PC-9 (cell line): ENCODE measurements at regions of chr4 and their contacts with region 1.

Region 1: DNA sequence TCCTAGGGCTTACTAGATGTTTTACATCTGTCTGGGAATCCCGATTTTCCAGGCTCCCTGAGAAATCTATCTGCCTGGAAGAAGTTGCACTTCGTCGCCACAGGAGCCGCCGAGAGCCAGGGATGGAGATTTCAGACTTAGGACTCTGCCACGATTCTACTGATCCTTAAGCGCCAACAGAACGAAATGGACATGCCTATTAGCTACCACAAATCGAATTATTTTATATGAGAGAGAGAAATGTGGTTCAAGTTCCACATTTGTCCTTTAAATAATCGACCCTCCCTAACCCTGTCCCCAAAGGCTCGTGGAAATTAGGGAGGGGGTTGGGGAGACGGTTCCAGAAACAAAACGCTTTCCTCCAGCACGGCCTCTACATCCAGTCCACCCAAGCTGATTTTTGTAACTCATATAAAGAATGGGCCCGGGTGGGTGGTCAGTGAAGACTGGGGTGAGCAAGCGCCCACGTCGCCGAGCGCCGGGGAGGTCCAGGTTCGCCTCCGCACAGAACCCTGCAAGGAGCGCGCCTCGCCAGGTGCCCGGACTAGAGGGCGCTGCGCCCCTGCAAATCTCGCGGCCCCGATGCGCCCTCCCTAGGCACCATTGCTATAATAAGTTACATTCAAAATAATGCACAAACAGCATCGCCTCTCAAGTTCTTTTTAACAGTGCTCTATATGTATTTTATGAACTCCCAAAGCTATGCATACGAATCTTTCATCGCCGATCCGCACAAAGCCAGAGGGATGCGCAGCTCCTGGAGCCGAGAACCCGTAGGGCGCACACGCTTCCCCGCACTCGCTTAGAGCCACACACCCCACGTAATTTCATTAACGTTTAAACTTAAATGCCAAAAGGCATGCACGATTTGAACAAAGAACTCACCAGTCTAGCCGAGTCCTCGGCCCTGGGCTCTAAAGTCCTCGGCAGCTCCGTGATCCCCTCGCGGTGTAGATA is 2.1 kb upstream of the FAT1 start:
- DNase-seq: peak; percentile 45 to 79
- H3K4me3 ChIP-seq: peak overlapping the region; percentile 98
- H3K27ac ChIP-seq: peak overlapping the region; percentile 57
- H3K4me1 ChIP-seq: peaks cover 40% of the 10 kb centered on the region
- H3K27me3 ChIP-seq: no peaks in the 10 kb centered on the region
- CTCF ChIP-seq: peak; percentile 77

Region 2: GRCh38 chr4:186297013-186297645 is 428.6 kb before region 1 on chr4:
- CTCF ChIA-PET with region 1: no interaction called
- POLR2A ChIA-PET with region 1: no interaction called
- intact Hi-C with region 1: loop called (anchors 5 kb)
- DNase-seq: no peak
- H3K4me3 ChIP-seq: no peak overlapping the region
- H3K27ac ChIP-seq: no peak overlapping the region
- H3K4me1 ChIP-seq: no peaks in the 10 kb centered on the region
- H3K27me3 ChIP-seq: peaks cover 14% of the 10 kb centered on the region
- CTCF ChIP-seq: peak; percentile 67

Region 3: DNA sequence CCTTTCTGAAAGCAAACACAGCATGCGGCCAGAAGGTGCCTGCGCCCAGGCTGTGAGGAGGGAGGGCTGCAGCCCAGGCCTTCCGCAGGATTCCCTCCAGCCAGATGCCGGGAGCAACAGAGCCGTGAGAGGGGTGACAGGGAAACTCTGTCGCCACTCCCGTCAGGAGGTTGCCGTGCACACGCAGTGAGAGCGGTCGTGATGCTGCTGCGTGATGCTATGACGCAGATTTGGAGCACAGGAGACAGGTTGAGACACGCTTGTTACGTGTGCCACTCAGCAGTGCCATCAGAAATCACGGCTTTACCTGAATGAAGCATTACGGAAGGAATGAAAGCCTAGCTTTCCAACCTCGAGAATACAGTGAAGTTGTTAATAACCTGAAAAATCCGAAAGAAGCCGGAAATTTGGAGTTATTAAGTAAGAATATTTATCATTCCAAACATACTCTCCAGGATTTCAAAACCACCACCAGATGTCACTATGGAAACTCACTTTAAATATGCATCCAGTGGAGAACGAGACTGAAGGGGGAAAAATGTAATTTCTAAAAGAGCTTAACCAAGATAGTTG is 56.5 kb before region 1 on chr4:
- CTCF ChIA-PET with region 1: interaction called, 4 read pairs
- POLR2A ChIA-PET with region 1: no interaction called
- intact Hi-C with region 1: loop called (anchors 1 kb)
- DNase-seq: no peak
- H3K4me3 ChIP-seq: no peak overlapping the region
- H3K27ac ChIP-seq: no peak overlapping the region
- H3K4me1 ChIP-seq: no peaks in the 10 kb centered on the region
- H3K27me3 ChIP-seq: no peaks in the 10 kb centered on the region
- CTCF ChIP-seq: peak; percentile 52

Region 4: DNA sequence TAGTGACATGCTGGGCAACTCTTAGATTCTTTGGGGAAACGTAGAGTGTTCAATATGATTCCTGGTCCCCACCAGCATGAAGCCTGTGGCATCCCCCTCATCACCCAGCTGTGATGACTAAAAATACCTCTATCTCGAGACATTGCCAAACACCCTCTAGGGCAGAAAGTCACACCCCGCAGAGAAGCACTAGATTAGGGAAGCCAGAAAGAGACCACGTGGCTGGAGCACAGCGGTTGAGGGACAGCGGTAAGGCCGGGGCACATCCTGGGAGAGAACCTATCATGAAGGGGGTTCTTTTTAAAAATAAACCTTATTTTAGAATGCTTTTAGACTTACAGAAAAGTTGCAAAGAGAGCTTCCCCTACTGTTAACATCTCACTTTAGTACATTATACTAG is 13.1 kb before region 1 on chr4:
- CTCF ChIA-PET with region 1: no interaction called
- POLR2A ChIA-PET with region 1: no interaction called
- intact Hi-C with region 1: no loop called
- DNase-seq: no peak
- H3K4me3 ChIP-seq: no peak overlapping the region
- H3K27ac ChIP-seq: no peak overlapping the region
- H3K4me1 ChIP-seq: no peaks in the 10 kb centered on the region
- H3K27me3 ChIP-seq: no peaks in the 10 kb centered on the region
- CTCF ChIP-seq: no peak

Region 5: GRCh38 chr4:186765138-186765537 is 39.4 kb after region 1 on chr4:
- CTCF ChIA-PET with region 1: no interaction called
- POLR2A ChIA-PET with region 1: no interaction called
- intact Hi-C with region 1: loop called (anchors 2 kb)
- DNase-seq: peak; percentile 80 to 92
- H3K4me3 ChIP-seq: peak overlapping the region; percentile 45; the same call in 1 of the 2 replicates
- H3K27ac ChIP-seq: peak overlapping the region; percentile 90
- H3K4me1 ChIP-seq: peaks cover 30% of the 10 kb centered on the region
- H3K27me3 ChIP-seq: no peaks in the 10 kb centered on the region
- CTCF ChIP-seq: no peak

Region 6: DNA sequence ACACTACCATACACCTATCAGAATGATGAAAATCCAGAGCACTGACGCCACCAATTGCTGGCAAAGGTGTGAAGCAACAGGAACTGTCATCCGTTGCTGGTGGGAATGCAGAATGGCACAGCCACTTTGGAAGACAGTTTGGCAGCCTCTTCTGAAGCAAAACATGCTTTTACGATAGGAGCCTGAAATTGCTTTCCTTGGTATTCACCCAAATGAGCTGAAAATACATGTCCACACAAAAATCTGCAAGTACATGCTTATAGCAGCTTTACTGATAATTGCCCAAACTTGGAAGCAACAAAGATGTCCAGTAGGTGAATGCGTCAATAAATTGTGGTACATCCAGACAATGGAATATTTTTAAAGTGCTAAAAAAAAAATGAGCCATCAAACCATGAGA is 320.7 kb after region 1 on chr4:
- CTCF ChIA-PET with region 1: no interaction called
- POLR2A ChIA-PET with region 1: no interaction called
- intact Hi-C with region 1: loop called (anchors 5 kb)
- DNase-seq: no peak
- H3K4me3 ChIP-seq: no peak overlapping the region
- H3K27ac ChIP-seq: no peak overlapping the region
- H3K4me1 ChIP-seq: no peaks in the 10 kb centered on the region
- H3K27me3 ChIP-seq: peaks cover 3% of the 10 kb centered on the region; the same call in 1 of the 2 replicates
- CTCF ChIP-seq: no peak

Region 7: DNA sequence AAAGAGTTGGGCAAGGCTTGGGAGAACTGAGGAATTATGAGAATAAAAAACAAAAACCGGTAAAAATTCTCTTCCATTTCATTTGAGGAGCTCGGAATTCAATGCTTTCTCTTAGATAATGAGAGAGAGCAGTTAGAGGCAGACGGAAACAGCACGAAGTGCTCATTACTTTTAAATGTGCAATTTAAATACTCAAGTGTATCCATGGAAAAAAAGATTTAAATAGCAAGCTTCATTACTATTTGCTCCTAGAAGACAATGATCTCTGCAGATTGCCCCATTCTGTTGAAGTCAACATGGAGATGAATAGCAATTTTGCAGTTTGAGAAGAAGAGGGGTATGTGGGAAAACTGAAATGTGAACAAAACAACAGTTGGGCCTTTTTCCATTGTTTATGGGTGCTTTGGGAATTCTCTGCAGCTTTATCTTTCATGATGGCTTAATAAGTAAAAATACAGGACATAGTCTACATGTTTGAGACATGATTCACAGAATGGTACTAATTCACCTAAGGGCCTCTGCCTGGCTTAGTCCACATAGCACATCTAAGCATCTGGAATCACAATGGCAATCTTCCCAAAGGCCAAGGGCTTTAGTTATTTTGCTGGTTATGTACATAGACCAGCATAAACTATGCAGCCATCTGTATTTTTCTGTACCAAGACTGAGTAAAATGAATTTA is 510.6 kb after region 1 on chr4:
- CTCF ChIA-PET with region 1: no interaction called
- POLR2A ChIA-PET with region 1: interaction called, 13 read pairs
- intact Hi-C with region 1: no loop called
- DNase-seq: peak in 1 of 2 experiments; percentile 37
- H3K4me3 ChIP-seq: no peak overlapping the region
- H3K27ac ChIP-seq: no peak overlapping the region
- H3K4me1 ChIP-seq: no peaks in the 10 kb centered on the region
- H3K27me3 ChIP-seq: no peaks in the 10 kb centered on the region
- CTCF ChIP-seq: no peak

Region 8: GRCh38 chr4:187602339-187603092 is 876.8 kb after region 1 on chr4:
- CTCF ChIA-PET with region 1: interaction called, 4 read pairs
- POLR2A ChIA-PET with region 1: interaction called, 3 read pairs
- intact Hi-C with region 1: loop called (anchors 5 kb)
- DNase-seq: no peak
- H3K4me3 ChIP-seq: no peak overlapping the region
- H3K27ac ChIP-seq: no peak overlapping the region
- H3K4me1 ChIP-seq: no peaks in the 10 kb centered on the region
- H3K27me3 ChIP-seq: no peaks in the 10 kb centered on the region
- CTCF ChIP-seq: no peak